ENCODE measurements at regions of chr16 and their contacts with region 1.

Region 1: DNA sequence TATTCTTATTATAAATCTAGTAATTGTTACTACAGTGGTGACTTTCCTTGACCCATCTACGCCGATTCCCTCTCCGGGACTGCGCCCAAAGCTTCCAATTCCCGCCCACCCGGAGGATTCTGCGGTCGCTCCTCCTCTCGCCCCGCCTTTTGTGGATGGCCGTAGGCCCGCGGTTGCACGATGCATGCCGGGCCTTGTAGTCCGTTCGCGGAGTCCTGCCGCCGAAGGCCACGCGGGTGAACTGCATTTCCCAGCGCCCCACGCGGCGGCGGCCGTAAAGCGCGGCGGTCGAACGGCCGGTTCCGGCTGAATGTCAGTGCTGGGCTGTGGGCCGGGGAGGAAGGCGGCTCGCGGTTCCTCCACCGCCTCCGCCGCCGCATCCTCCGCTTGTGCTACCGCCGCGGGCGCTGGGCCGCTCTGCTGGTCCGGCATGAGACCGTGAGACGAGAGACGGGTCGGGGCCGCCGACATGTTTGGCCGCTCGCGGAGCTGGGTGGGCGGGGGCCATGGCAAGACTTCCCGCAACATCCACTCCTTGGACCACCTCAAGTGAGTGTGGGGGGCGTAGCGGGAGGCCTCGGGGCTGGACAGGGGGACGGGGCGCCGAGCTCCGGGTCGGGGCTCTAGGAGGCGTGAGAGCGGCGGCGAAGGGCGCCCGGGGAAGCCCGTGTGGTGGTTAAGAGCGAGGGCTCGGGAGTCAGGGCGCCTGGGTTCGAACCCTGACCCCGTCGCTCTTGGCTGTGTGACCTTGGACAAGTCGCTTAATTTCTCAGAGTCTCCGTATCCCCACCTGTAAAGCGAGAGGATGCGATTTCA is at the start of gene CLEC16A:
- DNase-seq: peak; percentile 96
- ATAC-seq: peak; percentile 72
- H3K4me3 Mint-ChIP-seq: peak within 1 kb of the TSS; percentile 79
- H3K27ac Mint-ChIP-seq: peak within 1 kb of the TSS; percentile 66
- H3K4me1 Mint-ChIP-seq: peaks cover 67% of the 10 kb centered on the region
- H3K27me3 Mint-ChIP-seq: no peaks in the 10 kb centered on the region
- total RNA-seq, gene CLEC16A: 32.8 to 38.5 TPM

Region 2: DNA sequence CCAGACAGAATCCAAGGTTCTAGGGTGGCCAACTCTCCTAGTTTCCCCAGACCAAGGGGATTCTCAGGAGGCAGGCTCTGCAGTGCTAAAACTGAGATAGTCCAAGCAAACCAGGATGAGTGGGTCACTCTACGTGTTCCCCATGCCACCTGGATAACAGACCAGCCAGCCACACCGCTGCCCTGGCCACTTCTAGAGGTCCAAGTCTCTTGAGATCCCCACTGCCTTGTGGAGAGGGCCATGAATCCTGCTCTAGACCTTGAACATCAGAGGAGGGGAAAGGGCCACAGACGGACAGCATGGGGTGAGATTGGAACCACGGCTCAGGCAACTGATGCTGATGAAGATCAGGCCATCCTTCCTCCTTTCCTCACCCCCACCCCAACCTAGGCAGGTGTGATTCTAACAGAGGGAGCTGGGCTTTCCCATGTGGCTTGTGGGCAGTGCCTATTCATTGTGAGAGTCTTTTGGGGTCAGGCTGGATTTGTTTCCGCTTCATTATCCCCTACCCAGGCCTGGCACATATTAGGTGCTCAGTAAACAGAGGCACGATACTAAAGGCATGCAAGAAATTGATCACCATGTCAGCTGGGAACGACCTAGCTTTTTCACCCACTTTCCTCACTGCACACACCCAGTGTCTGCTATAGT is 109.1 kb before region 1 on chr16:
- CTCF ChIA-PET with region 1: no interaction called
- POLR2A ChIA-PET with region 1: no interaction called
- DNase-seq: peak; percentile 27
- ATAC-seq: peak; percentile 15
- H3K4me3 Mint-ChIP-seq: no peak overlapping the region
- H3K27ac Mint-ChIP-seq: no peak overlapping the region
- H3K4me1 Mint-ChIP-seq: no peaks in the 10 kb centered on the region
- H3K27me3 Mint-ChIP-seq: peaks cover 14% of the 10 kb centered on the region

Region 3: GRCh38 chr16:10954903-10955302 is 10.4 kb after region 1 on chr16:
- CTCF ChIA-PET with region 1: interaction called, 19 read pairs
- POLR2A ChIA-PET with region 1: interaction called, 5 read pairs
- DNase-seq: no peak
- ATAC-seq: no peak
- H3K4me3 Mint-ChIP-seq: peak overlapping the region; percentile 20
- H3K27ac Mint-ChIP-seq: peak overlapping the region; percentile 66
- H3K4me1 Mint-ChIP-seq: peaks cover 63% of the 10 kb centered on the region
- H3K27me3 Mint-ChIP-seq: no peaks in the 10 kb centered on the region